Mammary epithelial cell (primary cell): ENCODE measurements at regions of chr3 and their contacts with region 1.

Region 1: DNA sequence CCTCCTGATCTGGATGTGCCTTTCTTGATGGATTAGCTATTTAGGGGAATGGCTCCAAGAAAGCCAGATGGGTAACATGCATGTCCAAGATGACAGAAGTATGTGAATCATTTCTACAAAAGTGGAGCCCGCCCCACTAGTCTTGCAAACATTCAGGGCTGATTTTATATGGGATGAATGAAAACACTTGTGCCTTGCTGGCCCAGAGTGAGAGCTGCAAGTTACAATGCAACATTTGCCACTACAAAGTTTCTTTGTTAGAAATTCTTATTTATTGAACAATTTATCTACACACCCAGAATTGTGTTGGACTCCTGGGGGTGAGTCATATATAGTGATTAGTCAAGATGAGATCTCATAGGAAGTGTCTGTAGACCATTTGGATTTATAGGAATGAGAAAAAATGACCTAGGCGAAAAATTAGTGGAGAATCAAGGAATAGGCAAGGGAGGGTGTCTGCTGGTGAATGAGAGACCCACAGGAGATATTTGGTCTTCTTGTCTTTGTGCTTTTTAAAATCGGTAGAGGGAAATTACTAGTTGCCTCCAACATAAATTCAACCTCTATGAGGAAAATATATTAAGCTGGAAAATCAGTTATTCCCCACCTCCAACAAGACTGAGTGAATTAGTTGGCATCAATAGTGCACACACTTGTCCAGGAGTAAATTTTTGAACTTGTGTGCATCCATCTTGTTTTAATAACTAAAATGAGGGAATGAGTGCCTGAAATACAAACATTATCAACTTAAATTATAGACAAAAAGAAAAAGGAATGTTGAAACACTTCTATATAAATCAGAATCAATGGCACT is 53.5 kb upstream of the DCBLD2 start:
- DNase-seq: peak; percentile 74
- H3K4me3 ChIP-seq: no peak overlapping the region
- H3K27ac ChIP-seq: peak overlapping the region; percentile 19
- H3K4me1 ChIP-seq: peaks cover 22% of the 10 kb centered on the region
- H3K27me3 ChIP-seq: no peaks in the 10 kb centered on the region
- CTCF ChIP-seq: no peak

Region 2: GRCh38 chr3:98914210-98915080 is 40.6 kb before region 1 on chr3:
- CTCF ChIA-PET with region 1: no interaction called
- dilution Hi-C with region 1: loop called (anchors 5 kb)
- in situ Hi-C with region 1: no loop called
- intact Hi-C with region 1: no loop called
- DNase-seq: peak; percentile 48
- H3K4me3 ChIP-seq: no peak overlapping the region
- H3K27ac ChIP-seq: no peak overlapping the region
- H3K4me1 ChIP-seq: peaks cover 4% of the 10 kb centered on the region
- H3K27me3 ChIP-seq: no peaks in the 10 kb centered on the region
- CTCF ChIP-seq: no peak

Region 3: DNA sequence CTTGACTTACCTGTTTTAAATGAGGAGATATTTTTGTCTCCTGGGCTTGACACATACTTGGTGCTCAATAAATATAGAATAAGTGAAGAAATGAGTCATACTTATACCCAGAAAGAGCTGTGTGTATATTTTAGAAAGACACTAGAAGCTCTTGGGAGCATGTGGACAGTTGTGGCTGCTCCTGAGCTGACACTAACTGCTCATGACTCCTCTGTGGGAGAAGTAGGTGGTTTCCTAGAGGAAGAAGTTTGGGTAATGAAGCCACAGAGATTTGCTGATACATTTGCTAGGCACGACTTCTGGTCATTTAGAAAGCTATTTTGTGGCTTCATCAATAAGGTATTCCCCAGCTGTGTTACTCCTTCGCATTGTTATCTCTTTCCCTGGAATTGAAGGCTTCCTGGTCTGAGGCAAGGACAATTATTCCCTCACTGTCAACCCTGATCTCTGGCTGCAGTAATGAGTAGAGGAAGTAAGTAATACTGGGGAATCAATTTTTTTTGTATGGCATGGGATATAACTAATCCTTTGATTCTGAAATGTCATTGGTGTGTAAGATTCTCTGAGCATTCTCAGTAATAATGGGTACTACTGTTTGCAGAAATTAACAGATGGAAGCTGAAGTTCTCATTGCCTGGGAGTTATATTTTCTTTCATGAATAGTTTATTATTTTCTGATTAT is 26.1 kb after region 1 on chr3:
- CTCF ChIA-PET with region 1: no interaction called
- dilution Hi-C with region 1: no loop called
- in situ Hi-C with region 1: no loop called
- intact Hi-C with region 1: no loop called
- DNase-seq: peak; percentile 93
- H3K4me3 ChIP-seq: peak overlapping the region; percentile 34 to 83 (median 73)
- H3K27ac ChIP-seq: peak overlapping the region; percentile 81
- H3K4me1 ChIP-seq: peaks cover 45% of the 10 kb centered on the region
- H3K27me3 ChIP-seq: no peaks in the 10 kb centered on the region
- CTCF ChIP-seq: no peak

Region 4: GRCh38 chr3:99012051-99012450 is 57.1 kb after region 1 on chr3:
- CTCF ChIA-PET with region 1: no interaction called
- dilution Hi-C with region 1: no loop called
- in situ Hi-C with region 1: no loop called
- intact Hi-C with region 1: no loop called
- DNase-seq: no peak
- H3K4me3 ChIP-seq: no peak overlapping the region
- H3K27ac ChIP-seq: no peak overlapping the region
- H3K4me1 ChIP-seq: no peaks in the 10 kb centered on the region
- H3K27me3 ChIP-seq: no peaks in the 10 kb centered on the region
- CTCF ChIP-seq: no peak

Region 5: DNA sequence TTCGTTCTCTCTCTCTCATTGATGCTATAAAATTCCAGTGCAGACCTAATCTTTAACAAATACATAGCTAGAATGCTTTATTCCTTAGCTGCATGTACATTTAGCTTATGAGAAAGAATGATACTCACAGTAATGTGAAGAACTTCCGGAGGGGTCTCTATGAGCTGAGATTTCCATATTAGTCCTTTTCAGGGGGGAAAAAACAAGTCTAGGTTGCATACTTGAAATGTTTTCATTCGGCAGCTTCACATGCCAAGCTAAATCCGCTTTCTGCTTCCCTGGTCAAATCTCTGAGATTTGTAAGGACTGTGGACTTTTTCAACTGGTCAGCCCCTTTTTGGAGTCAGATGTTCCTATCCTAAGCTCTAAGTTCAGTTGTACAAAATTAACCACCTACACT is 571.9 kb after region 1 on chr3:
- CTCF ChIA-PET with region 1: no interaction called
- dilution Hi-C with region 1: no loop called
- in situ Hi-C with region 1: no loop called
- intact Hi-C with region 1: no loop called
- DNase-seq: no peak
- H3K4me3 ChIP-seq: no peak overlapping the region
- H3K27ac ChIP-seq: no peak overlapping the region
- H3K4me1 ChIP-seq: no peaks in the 10 kb centered on the region
- H3K27me3 ChIP-seq: no peaks in the 10 kb centered on the region
- CTCF ChIP-seq: no peak